ENCODE measurements at regions of chr4 and their contacts with region 1.

Region 1: GRCh38 chr4:2281575-2282343 is 19.9 kb upstream of the MXD4 start:
- DNase-seq: peak; percentile 64 to 94 (median 91)
- ATAC-seq: peak; percentile 91 to 92
- H3K4me3 Mint-ChIP-seq: peak overlapping the region; percentile 55 to 91 (median 82)
- H3K27ac Mint-ChIP-seq: peak overlapping the region; percentile 98 to 100 (median 99)
- H3K4me1 Mint-ChIP-seq: peaks cover 19 to 47% (median 43%) of the 10 kb centered on the region in 4 donors
- H3K27me3 Mint-ChIP-seq: no peaks in the 10 kb centered on the region

Region 2: GRCh38 chr4:2135083-2135482 is 146.7 kb before region 1 on chr4:
- POLR2A ChIA-PET with region 1: no interaction called
- DNase-seq: peak in 9 of 10 donors; percentile 12 to 70 (median 44)
- ATAC-seq: peak; percentile 91 to 95
- H3K4me3 Mint-ChIP-seq: peak overlapping the region in 8 of 10 donors; percentile 26 to 59 (median 41)
- H3K27ac Mint-ChIP-seq: peak overlapping the region in 6 of 10 donors; percentile 3 to 80 (median 48)
- H3K4me1 Mint-ChIP-seq: peaks cover 13 to 33% (median 24%) of the 10 kb centered on the region in 4 donors
- H3K27me3 Mint-ChIP-seq: no peaks in the 10 kb centered on the region

Region 3: DNA sequence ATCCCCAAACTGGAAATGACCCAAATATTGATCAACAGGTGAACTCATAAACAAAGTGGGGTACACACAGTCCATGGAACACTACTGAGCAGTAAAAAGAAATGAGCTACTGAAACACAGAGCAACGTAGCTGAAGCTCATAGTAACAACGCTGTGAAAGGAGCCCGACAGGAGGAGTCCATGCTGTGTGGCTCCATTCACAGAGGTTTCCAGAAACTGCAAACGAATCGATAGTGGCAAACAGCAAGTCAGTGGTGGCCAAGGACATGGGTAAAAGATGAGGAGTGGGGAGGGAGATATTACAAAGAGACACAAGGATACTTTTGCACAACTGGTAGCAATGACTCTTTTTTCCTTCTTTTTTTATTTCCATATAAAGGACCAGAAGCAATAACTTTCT is 130.2 kb before region 1 on chr4:
- POLR2A ChIA-PET with region 1: no interaction called
- DNase-seq: no peak
- ATAC-seq: no peak
- H3K4me3 Mint-ChIP-seq: no peak overlapping the region
- H3K27ac Mint-ChIP-seq: peak overlapping the region in 1 of 10 donors; percentile 33
- H3K4me1 Mint-ChIP-seq: no peaks in the 10 kb centered on the region
- H3K27me3 Mint-ChIP-seq: no peaks in the 10 kb centered on the region

Region 4: DNA sequence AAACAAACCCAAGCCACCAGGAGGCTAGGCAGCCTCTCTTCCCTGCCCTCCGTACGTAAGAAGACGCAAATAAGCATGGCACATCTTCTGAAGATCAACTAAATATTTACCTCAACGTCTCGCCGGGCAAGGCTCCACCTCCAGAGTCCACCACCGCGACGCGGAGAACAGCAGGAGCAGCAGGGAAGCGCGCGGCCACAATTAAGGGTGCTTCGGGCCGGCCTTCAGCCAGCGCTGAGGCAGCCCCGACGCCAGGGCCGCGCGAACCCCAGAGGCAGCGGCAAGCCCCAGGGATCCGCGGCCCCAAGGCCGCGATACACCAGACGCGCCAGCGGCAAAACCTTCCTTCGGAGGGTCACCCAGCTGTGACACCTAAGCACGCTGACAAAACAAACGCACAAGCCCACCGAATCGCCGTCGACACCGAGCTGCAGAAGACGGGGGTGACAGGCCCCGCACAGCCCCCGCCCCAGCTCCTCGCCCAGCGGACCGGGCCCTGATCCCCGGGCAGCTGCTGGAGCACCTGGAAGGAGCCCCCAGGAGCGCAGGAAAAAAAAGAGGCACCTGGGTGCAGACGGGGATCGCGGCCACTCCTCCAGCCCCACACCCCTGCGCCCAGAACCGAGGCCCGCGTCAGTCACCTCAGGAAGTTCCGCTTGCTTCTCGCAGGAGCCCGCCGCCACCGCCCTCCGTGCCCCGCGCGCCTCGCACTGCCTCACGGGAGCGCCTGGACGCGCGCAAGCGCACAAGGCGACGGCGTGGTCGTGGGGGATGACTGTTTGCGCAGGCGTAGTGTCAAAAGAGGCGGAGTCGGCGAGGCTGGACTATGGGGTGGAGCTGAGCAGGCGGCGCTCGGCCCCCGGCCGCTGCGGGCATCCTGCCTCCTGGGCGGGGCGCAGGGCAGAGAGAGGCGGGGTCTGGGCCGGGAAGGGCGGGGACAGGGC is 40.1 kb before region 1 on chr4 and contains the starts of genes HAUS3 and POLN:
- POLR2A ChIA-PET with region 1: interaction called, 12 read pairs
- DNase-seq: peak; percentile 96 to 100 (median 99)
- ATAC-seq: peak; percentile 86 to 87
- H3K4me3 Mint-ChIP-seq: peak within 1 kb of the TSS; percentile 85 to 96 (median 90)
- H3K27ac Mint-ChIP-seq: peak within 1 kb of the TSS; percentile 83 to 97 (median 94)
- H3K4me1 Mint-ChIP-seq: peaks cover 36 to 73% (median 63%) of the 10 kb centered on the region in 4 donors
- H3K27me3 Mint-ChIP-seq: no peaks in the 10 kb centered on the region
- polyA plus RNA-seq, gene HAUS3: 16.3 to 22.2 (median 18.8) TPM
- polyA plus RNA-seq, gene POLN: 0.44 to 0.55 TPM in 2 of 3 donors, not detected in the other

Region 5: DNA sequence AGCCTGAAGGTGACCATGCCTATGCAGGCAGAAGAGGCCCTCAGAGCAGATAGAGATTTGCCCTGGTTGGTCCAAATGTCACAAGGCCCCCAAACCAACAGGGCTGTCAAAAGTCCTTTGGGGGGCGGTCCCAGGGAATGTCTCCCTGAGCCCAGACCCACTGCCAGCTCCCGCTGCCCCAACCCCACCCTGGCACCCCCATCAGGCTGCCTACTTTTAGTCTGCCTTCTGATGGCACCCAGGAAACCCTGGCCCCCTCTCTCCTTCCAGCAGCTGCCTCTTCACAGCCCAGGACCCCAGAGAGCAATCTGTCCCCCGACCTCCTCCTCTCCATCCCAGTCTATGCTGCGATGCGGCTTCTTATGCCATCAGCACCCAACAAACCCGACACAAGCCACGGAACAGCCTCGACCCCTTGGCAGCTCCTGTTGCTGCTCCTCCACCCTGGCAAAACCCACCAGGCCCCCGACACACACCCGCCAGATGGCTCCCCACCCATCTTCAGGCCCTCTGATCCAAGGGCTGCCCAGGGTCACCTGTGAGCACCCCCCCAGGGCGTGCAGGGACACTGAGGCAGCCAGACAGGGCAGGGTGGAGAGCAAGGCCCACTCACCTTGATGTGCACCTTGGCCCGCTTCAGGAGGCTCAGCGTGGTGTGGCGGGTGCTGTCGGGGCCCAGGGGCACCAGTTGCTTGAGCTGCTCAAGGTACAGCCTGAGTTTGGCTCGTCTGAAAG is 29.8 kb before region 1 on chr4:
- POLR2A ChIA-PET with region 1: no interaction called
- DNase-seq: peak in 2 of 10 donors; percentile 13 to 57
- ATAC-seq: no peak
- H3K4me3 Mint-ChIP-seq: peak overlapping the region in 1 of 10 donors; percentile 60
- H3K27ac Mint-ChIP-seq: peak overlapping the region in 5 of 10 donors; percentile 15 to 81 (median 51)
- H3K4me1 Mint-ChIP-seq: peaks cover 0 to 9% (median 6%) of the 10 kb centered on the region in 4 donors
- H3K27me3 Mint-ChIP-seq: no peaks in the 10 kb centered on the region

Region 6: DNA sequence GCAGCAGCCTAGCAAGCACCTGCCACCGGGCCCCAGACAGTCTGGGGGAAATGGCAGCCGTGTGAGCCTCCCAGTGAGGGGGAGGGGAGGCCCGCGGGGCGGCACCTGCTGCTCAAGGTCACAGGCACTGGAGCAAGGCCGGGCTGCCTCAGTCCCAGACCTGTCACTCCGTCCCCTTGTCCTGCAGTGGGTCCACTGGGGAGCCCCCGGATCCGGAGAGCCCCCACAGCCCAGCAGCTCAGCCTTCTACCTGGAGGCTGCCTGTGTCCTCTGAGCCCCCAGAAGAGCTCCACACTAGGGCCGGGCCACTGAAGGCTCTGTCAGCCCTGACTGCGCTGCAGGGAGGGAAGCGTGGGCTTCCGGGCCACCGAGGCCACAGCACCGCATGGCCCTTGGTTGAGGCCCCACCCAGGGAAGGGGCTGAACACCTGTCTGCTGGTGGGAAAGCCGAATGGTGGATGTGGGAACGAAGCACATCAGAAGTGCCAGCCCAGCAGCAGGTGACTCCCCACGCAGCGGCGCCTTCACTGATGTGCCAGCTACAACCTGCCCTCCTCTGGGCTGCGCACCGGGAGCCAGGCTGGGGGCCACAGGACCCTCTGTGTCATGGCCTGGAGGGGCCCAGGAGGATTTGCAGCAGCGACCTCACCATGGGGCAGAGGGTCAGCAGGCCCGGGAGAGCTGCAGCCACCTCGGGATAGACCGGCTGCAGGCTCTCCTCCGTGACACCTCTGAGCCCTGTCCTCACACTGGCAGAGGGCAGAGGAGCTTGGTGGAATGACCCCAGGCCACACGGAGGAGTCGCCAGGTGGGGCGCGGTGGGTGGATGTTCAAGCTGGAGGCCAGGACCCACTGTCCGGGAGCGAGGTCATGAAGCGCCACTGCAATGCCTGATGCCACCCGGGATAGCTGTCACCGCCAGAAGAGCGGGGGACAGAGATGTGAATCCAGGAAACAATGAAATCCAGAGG is 15.2 kb after region 1 on chr4:
- POLR2A ChIA-PET with region 1: interaction called, 25 read pairs
- DNase-seq: peak in 7 of 10 donors; percentile 35 to 57 (median 53)
- ATAC-seq: peak; percentile 77 to 83
- H3K4me3 Mint-ChIP-seq: peak overlapping the region; percentile 61 to 89 (median 82)
- H3K27ac Mint-ChIP-seq: peak overlapping the region; percentile 79 to 97 (median 94)
- H3K4me1 Mint-ChIP-seq: peaks cover 28 to 65% (median 56%) of the 10 kb centered on the region in 4 donors
- H3K27me3 Mint-ChIP-seq: no peaks in the 10 kb centered on the region

Region 7: DNA sequence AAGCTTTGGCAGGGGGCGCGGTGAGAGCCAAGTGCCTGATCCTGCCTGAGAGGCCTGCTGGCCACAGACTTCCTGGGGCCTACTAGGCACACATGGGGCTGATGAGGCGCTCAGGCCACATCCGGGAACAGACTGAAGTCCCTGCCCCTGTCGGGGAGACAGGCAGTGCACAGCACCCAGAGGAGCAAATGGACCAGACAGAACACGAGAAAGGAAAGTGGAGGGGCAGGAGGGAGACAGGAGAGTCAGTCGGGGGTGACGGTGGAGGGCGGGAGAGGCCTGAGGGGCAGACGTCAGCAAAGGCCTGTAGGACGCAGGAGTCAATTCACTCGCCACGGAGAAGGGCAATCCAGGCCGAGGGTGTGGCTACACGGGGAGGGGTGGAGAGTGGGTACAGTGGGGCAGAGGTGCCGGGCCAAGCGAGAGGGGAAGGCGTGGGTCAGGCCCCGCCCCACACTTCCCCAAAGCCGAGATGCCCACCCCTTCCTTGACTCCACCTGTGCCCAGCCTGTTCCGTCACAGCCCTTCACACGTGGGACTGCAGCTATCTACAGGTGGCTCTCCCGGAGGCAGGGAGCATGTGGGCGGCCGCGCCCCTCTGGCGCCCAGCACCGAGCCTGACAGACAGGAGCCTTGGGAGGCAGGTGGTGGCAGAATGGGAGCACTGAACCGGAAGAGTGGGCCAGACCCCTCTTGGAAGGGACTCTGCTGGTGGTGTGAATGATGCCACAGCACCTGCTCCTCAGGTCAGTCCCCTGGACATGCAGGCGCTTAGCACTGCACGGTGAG is 661.0 kb after region 1 on chr4:
- POLR2A ChIA-PET with region 1: no interaction called
- DNase-seq: no peak
- ATAC-seq: peak in 1 of 2 donors; percentile 17
- H3K4me3 Mint-ChIP-seq: peak overlapping the region in 1 of 10 donors; percentile 42
- H3K27ac Mint-ChIP-seq: peak overlapping the region in 8 of 10 donors; percentile 8 to 90 (median 65)
- H3K4me1 Mint-ChIP-seq: peaks cover 0 to 14% (median 4%) of the 10 kb centered on the region in 4 donors
- H3K27me3 Mint-ChIP-seq: no peaks in the 10 kb centered on the region

Measured in naive thymus-derived CD8-positive, alpha-beta T cell (primary cell).